ENCODE measurements at regions of chr10 and their contacts with region 1.

Region 1: GRCh38 chr10:35412900-35413491 is 76.7 kb downstream of the CCNY start:
- DNase-seq: no peak
- H3K4me3 Mint-ChIP-seq: no peak overlapping the region
- H3K27ac Mint-ChIP-seq: no peak overlapping the region
- H3K4me1 Mint-ChIP-seq: peaks cover 41% of the 10 kb centered on the region
- H3K27me3 Mint-ChIP-seq: no peaks in the 10 kb centered on the region

Region 2: GRCh38 chr10:35442028-35442427 is 29.0 kb after region 1 on chr10:
- intact Hi-C with region 1: loop called (anchors 1 kb)
- DNase-seq: no peak
- H3K4me3 Mint-ChIP-seq: no peak overlapping the region
- H3K27ac Mint-ChIP-seq: peak overlapping the region; percentile 80
- H3K4me1 Mint-ChIP-seq: peaks cover 33% of the 10 kb centered on the region
- H3K27me3 Mint-ChIP-seq: no peaks in the 10 kb centered on the region

Measured in activated CD4-positive, alpha-beta T cell treated with anti-CD3 and anti-CD28 coated beads, Interleukin-2, amount 10 ng/mL, durations not matched to agents 24 days and 14 days (primary cell).